ENCODE measurements at regions of chr2 and their contacts with region 1.

Region 1: DNA sequence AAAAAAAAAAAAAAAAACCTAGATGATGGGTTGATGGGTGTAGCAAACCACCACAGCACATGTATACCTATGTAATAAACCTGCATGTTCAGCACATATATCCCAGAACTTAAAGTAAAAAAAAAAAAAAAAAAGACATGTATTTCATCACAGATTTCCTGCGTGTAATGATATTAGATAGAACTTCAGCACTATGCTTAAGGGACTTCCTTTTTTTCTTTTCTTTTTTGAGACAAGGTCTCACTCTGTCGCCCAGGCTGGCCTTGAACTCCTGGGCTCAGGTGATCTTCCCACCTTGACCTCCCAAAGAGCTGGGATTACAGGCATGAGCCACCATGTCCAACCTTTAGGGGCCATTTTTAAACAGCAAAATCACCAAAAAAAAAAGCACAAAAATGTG is 42.0 kb downstream of the NEURL3 start:
- DNase-seq: no peak
- H3K4me3 Mint-ChIP-seq: no peak overlapping the region
- H3K27ac Mint-ChIP-seq: no peak overlapping the region
- H3K4me1 Mint-ChIP-seq: no peaks in the 10 kb centered on the region
- H3K27me3 Mint-ChIP-seq: peaks cover 7% of the 10 kb centered on the region

Region 2: DNA sequence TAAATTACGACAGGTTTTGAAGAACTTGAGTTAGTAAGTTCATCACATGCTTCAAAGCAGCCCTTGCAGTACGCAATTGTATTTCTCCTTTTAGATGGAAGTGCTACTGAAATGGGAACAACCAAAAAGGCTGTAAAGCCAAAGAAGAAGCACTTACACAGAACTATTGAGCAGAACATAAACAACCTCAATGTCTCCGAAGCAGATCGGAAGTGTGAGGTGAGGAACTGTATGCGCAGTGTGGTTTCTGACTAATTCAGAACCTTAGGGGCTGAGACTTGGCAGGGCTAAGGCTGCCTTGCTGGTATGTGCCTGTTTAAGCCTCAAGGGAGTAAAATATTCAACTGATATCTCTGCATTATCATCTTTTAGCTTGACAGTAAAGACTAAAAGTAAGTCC is 119.1 kb before region 1 on chr2:
- intact Hi-C with region 1: no loop called
- DNase-seq: peak; percentile 75
- H3K4me3 Mint-ChIP-seq: no peak overlapping the region
- H3K27ac Mint-ChIP-seq: peak overlapping the region; percentile 75
- H3K4me1 Mint-ChIP-seq: peaks cover 47% of the 10 kb centered on the region
- H3K27me3 Mint-ChIP-seq: no peaks in the 10 kb centered on the region

Region 3: DNA sequence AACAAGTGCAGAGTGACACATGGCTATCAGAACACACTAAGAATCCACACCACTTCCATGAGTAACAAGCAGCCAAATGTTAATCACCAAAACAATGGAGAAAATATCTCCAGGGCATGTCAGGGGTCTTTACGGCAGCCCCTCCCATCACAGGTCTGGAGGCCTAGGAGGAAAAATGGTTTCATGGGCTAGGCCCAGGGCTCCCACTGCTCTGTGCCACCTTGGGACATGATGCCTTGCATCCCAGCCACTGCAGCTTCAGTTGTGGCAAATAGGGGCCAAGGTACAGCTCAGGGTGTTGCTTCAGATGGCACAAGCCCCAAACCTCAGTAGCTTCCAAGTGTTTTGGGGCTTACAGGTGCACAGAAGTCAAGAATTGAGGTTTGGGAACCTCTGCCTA is 24.5 kb before region 1 on chr2:
- intact Hi-C with region 1: loop called (anchors 2 kb)
- DNase-seq: no peak
- H3K4me3 Mint-ChIP-seq: no peak overlapping the region
- H3K27ac Mint-ChIP-seq: no peak overlapping the region
- H3K4me1 Mint-ChIP-seq: no peaks in the 10 kb centered on the region
- H3K27me3 Mint-ChIP-seq: peaks cover 8% of the 10 kb centered on the region

Region 4: GRCh38 chr2:96485751-96486651 is 22.9 kb after region 1 on chr2:
- intact Hi-C with region 1: no loop called
- DNase-seq: peak; percentile 97
- H3K4me3 Mint-ChIP-seq: peak overlapping the region; percentile 92
- H3K27ac Mint-ChIP-seq: peak overlapping the region; percentile 98
- H3K4me1 Mint-ChIP-seq: peaks cover 55% of the 10 kb centered on the region
- H3K27me3 Mint-ChIP-seq: peaks cover 2% of the 10 kb centered on the region

Measured in activated CD4-positive, alpha-beta T cell treated with anti-CD3 and anti-CD28 coated beads, Interleukin-2, amount 10 ng/mL, durations not matched to agents 24 days and 14 days (primary cell).